ENCODE measurements at regions of chr10 and their contacts with region 1.

Region 1: GRCh38 chr10:17562614-17563013 is 54.6 kb downstream of the HACD1 start:
- DNase-seq: no peak
- H3K4me3 ChIP-seq: no peak overlapping the region
- H3K27ac ChIP-seq: no peak overlapping the region
- H3K4me1 ChIP-seq: no peaks in the 10 kb centered on the region
- H3K27me3 ChIP-seq: no peaks in the 10 kb centered on the region
- CTCF ChIP-seq: no peak
- EP300 ChIP-seq: no peak
- POLR2A ChIP-seq: no peak

Region 2: DNA sequence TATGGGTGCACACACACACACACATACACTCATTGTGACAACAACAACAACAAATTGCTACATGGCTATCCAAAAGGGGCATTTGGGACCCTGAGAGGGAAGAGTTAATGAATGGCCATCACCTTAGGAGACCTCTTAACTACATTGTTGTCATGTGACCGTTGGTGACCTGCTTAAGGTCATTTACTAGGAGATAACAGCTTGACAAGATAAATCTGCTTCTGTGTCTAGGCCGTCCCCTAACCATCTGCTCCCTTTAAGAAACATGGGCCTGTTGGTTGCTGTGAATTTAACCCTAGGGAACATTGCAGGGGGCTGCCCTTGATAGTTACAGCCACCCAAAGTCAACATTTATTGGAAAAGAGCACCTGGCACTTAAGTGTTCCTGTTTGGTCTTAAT is 1070.7 kb before region 1 on chr10:
- in situ Hi-C with region 1: no loop called
- intact Hi-C with region 1: no loop called
- DNase-seq: no peak
- H3K4me3 ChIP-seq: no peak overlapping the region
- H3K27ac ChIP-seq: no peak overlapping the region
- H3K4me1 ChIP-seq: no peaks in the 10 kb centered on the region
- H3K27me3 ChIP-seq: no peaks in the 10 kb centered on the region
- CTCF ChIP-seq: no peak
- EP300 ChIP-seq: no peak
- POLR2A ChIP-seq: no peak

Region 3: GRCh38 chr10:17316488-17317170 is 246.0 kb before region 1 on chr10:
- in situ Hi-C with region 1: no loop called
- intact Hi-C with region 1: no loop called
- DNase-seq: no peak
- H3K4me3 ChIP-seq: no peak overlapping the region
- H3K27ac ChIP-seq: no peak overlapping the region
- H3K4me1 ChIP-seq: no peaks in the 10 kb centered on the region
- H3K27me3 ChIP-seq: no peaks in the 10 kb centered on the region
- CTCF ChIP-seq: no peak
- EP300 ChIP-seq: no peak
- POLR2A ChIP-seq: no peak

Region 4: DNA sequence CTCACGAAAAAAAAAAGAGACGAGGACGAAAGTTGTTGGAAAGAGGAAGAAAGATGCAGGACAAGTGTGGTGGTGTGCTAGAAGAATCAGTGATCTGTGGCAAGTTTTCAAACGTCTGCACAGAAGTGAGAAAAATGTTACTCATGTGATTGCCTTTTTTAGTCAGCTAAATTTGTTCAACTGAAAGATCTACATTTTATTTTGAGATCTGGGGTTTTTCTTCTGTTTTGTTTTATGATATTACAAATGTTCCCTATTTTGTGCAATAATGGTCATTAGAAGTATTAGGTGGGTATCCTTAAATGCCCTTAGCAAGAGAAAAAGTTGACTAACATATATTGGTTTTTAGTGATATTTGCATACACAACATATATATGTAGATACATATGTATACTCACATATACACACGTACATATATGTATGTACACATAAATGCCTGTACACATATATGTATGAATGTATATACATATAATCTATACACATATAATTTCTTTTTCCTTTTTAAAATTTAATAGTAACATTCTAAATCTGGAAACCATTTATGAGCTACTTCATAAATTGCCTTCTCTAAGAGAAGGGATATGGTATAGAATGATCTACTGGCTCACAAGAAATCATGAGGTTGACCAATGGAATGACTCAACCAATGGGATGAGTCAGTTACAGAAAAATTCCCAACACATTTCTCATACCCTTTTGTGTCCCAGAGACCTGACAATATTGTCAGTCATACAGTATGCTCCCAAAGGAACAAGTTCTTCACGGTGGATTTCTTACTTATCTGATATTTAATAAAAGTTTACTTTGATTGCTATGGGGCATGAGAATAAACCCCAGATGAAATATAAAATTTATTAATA is 427.5 kb after region 1 on chr10:
- in situ Hi-C with region 1: loop called in 1 of 4 experiments (anchors 25 kb)
- intact Hi-C with region 1: no loop called
- DNase-seq: no peak
- H3K4me3 ChIP-seq: no peak overlapping the region
- H3K27ac ChIP-seq: no peak overlapping the region
- H3K4me1 ChIP-seq: no peaks in the 10 kb centered on the region
- H3K27me3 ChIP-seq: no peaks in the 10 kb centered on the region
- CTCF ChIP-seq: no peak
- EP300 ChIP-seq: no peak
- POLR2A ChIP-seq: no peak

Region 5: DNA sequence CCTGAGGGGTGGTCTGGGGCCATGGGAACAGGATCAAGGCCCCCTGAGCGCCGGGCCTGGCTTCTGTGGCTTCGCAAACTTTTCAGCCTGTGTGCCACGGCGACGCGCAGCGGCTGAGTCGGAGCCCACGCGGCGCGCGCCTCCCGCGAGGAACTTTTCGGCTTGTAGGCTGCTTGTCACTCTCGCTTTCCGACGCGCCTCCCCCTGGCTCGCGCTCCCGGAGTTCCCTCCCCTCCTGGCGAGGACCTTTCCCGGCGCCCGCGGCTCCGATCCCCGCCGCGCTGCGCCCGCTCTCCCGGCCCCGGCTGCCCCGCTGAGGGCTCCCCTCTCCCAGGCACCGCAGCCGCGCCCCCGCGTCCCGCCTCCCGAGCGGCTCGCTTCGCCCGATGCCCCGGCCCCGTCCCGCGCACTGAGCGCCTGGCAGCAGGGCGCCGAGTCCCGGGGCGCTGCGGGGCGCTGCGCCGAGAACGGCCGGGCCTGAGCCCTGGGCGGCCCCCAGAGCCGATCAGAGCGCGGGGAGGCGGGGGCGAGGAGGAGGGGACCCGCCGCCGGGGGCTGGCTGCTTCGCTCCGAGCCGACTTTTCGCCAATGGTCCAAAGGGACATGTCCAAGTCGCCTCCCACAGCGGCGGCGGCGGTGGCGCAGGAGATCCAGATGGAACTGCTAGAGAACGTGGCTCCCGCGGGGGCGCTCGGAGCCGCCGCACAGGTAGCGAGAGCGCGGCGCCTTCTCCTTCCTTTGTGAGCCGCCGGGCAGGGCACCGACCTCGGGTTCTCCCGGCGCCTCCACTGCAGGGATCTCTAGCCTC is 577.7 kb after region 1 on chr10 and contains the start of gene CACNB2:
- in situ Hi-C with region 1: no loop called
- intact Hi-C with region 1: no loop called
- DNase-seq: peak; percentile 75
- H3K4me3 ChIP-seq: peak within 1 kb of the TSS; percentile 68 to 86 (median 79)
- H3K27ac ChIP-seq: peak within 1 kb of the TSS; percentile 88 to 94 (median 89)
- H3K4me1 ChIP-seq: peaks cover 6 to 12% (median 9%) of the 10 kb centered on the region in 4 donors
- H3K27me3 ChIP-seq: peaks cover 9% of the 10 kb centered on the region
- CTCF ChIP-seq: no peak
- EP300 ChIP-seq: no peak
- POLR2A ChIP-seq: peak; percentile 49
- total RNA-seq, gene CACNB2: 16.2 to 338 (median 23.7) TPM

Region 6: GRCh38 chr10:18399158-18399557 is 836.5 kb after region 1 on chr10:
- in situ Hi-C with region 1: no loop called
- intact Hi-C with region 1: loop called (anchors 5 kb)
- DNase-seq: no peak
- H3K4me3 ChIP-seq: no peak overlapping the region
- H3K27ac ChIP-seq: peak overlapping the region in 3 of 4 donors; percentile 87 to 89 (median 88)
- H3K4me1 ChIP-seq: peaks cover 0 to 12% (median 0%) of the 10 kb centered on the region in 4 donors
- H3K27me3 ChIP-seq: no peaks in the 10 kb centered on the region
- CTCF ChIP-seq: no peak
- EP300 ChIP-seq: no peak
- POLR2A ChIP-seq: no peak

Measured in transverse colon (tissue), 4 donors.